Right cardiac atrium (tissue), 5 donors: ENCODE measurements at regions of chr6 and their contacts with region 1.

Region 1: DNA sequence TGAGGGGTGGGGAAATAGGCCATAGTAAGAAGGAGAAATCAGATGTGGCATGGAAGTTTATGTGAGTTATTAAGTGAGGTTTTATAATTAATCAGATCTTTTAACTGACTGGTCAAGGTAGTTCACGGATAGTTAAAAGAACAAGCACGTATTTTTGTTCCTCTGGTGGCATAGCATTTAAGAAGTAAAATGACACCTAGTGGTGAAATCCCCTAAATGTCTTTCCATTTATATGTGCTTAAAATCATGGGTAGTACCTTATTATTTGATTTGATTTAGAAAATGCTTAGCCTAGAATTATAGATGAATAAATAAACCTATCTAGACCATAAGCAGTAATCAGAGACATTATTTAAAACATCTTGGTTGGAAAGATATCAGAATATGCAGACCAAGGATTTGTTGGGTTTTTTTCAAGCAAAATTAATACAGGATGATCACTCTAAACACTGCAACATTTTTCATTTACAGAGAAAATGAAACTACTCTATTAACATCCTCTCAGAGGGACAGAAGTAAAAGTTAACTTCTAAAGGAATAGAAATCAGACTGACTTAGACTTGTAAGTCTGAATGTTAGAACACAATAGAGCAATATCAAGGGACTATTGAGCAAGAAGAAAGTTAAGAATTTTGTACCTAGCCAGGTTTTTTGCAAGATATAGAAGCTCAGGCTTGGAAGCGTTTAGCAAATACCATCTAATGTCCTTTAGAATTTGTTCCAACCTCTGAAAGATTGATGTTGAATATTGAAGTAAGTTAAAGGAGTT is 81.1 kb downstream of the STXBP5 start:
- DNase-seq: no peak
- ATAC-seq: peak in 1 of 2 donors; percentile 64
- H3K4me3 ChIP-seq: no peak overlapping the region
- H3K27ac ChIP-seq: no peak overlapping the region
- H3K4me1 ChIP-seq: peaks cover 2% of the 10 kb centered on the region
- H3K27me3 ChIP-seq: no peaks in the 10 kb centered on the region

Region 2: DNA sequence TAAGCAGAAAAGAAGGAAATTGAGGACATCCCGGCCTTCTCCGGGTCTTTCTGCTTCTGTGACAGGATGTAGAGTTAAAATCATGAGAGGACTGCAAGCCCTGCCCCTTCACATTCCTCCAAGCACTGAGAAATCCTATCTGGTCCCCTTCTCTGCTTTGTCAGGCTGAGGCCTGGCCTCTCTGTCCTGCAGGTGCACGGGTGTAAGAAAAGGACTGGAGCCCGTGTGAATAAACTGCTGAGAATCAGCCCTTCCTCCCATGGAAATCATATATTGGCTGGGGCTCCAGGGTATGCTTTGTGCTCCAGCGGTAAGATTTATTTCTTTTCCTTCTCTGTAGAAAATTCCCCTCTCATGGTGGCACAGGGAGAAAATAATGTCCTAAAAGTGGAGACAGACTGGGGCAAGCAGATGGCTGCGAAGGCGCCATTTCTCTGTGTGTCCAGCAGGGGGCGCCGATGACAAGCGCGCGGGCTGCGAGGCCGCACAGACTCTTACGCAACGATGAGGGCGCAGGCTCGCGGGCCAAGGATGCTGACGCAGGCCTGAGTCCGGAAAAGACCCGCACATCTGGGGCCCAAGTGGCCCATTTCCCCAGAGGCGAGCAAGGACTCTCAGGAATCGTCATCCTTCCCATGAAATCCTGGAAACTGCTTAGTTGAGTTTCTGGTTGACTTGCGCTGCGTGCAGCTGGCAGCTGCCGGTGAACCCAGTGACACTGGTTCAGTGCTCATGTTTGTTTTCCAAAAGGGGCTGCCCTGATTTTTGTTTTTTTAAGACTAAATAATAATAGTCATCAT is 427.9 kb before region 1 on chr6:
- intact Hi-C with region 1: loop called (anchors 5 kb)
- DNase-seq: peak; percentile 89 to 95 (median 94)
- ATAC-seq: peak; percentile 96 to 97
- H3K4me3 ChIP-seq: peak overlapping the region; percentile 48
- H3K27ac ChIP-seq: peak overlapping the region; percentile 79
- H3K4me1 ChIP-seq: no peaks in the 10 kb centered on the region
- H3K27me3 ChIP-seq: no peaks in the 10 kb centered on the region

Region 3: GRCh38 chr6:147077251-147077650 is 208.0 kb before region 1 on chr6:
- intact Hi-C with region 1: no loop called
- DNase-seq: no peak
- ATAC-seq: no peak
- H3K4me3 ChIP-seq: no peak overlapping the region
- H3K27ac ChIP-seq: no peak overlapping the region
- H3K4me1 ChIP-seq: no peaks in the 10 kb centered on the region
- H3K27me3 ChIP-seq: no peaks in the 10 kb centered on the region